PC-9 (cell line): ENCODE measurements at regions of chr6 and their contacts with region 1.

Region 1: GRCh38 chr6:117463762-117464665 is 18.5 kb upstream of the DCBLD1 start:
- DNase-seq: peak; percentile 12 to 66
- H3K4me3 ChIP-seq: no peak overlapping the region
- H3K27ac ChIP-seq: no peak overlapping the region
- H3K4me1 ChIP-seq: peaks cover 19% of the 10 kb centered on the region
- H3K27me3 ChIP-seq: no peaks in the 10 kb centered on the region
- CTCF ChIP-seq: no peak

Region 2: GRCh38 chr6:117513778-117514370 is 49.9 kb after region 1 on chr6:
- CTCF ChIA-PET with region 1: no interaction called
- POLR2A ChIA-PET with region 1: no interaction called
- intact Hi-C with region 1: loop called (anchors 2 kb)
- DNase-seq: no peak
- H3K4me3 ChIP-seq: no peak overlapping the region
- H3K27ac ChIP-seq: no peak overlapping the region
- H3K4me1 ChIP-seq: peaks cover 4% of the 10 kb centered on the region; the same call in 1 of the 2 replicates
- H3K27me3 ChIP-seq: no peaks in the 10 kb centered on the region
- CTCF ChIP-seq: no peak